ENCODE measurements at regions of chr3 and their contacts with region 1.

Region 1: GRCh38 chr3:186930641-186931531 is 560 bp downstream of the ST6GAL1 start:
- DNase-seq: peak; percentile 67 to 80
- H3K4me3 ChIP-seq: peak overlapping the region; percentile 81
- H3K4me3 Mint-ChIP-seq: peak overlapping the region; percentile 91
- H3K27ac Mint-ChIP-seq: peak overlapping the region; percentile 83
- H3K4me1 ChIP-seq: no peaks in the 10 kb centered on the region
- H3K4me1 Mint-ChIP-seq: peaks cover 5% of the 10 kb centered on the region
- H3K27me3 ChIP-seq: no peaks in the 10 kb centered on the region
- H3K27me3 Mint-ChIP-seq: no peaks in the 10 kb centered on the region
- CTCF ChIP-seq: peak in 1 of 2 experiments; percentile 12

Region 2: DNA sequence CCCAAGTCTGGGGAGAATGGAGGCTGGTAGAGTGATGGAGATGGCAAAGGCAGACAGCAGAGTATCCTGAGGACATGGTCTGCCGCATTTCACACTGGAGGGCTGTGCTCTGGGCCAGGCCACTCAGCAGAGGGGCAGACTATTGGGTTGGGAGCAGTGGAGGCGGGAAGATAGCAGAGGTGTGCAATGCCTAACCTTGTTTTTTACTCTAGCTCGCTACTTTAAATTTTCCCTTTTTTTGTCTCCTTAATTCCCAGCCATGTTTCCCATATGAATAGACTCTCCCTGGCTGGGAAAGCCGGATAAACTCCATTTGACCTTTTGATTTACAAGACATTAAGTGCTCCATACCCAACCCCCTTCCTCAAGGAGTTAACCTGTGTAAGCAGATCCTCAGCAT is 34.0 kb before region 1 on chr3:
- CTCF ChIA-PET with region 1: no interaction called
- POLR2A ChIA-PET with region 1: no interaction called
- intact Hi-C with region 1: loop called (anchors 5 kb)
- DNase-seq: no peak
- H3K4me3 ChIP-seq: no peak overlapping the region
- H3K4me3 Mint-ChIP-seq: peak overlapping the region; percentile 42
- H3K27ac Mint-ChIP-seq: peak overlapping the region; percentile 83
- H3K4me1 ChIP-seq: peaks cover 27% of the 10 kb centered on the region
- H3K4me1 Mint-ChIP-seq: peaks cover 21% of the 10 kb centered on the region
- H3K27me3 ChIP-seq: no peaks in the 10 kb centered on the region
- H3K27me3 Mint-ChIP-seq: no peaks in the 10 kb centered on the region
- CTCF ChIP-seq: no peak

Region 3: DNA sequence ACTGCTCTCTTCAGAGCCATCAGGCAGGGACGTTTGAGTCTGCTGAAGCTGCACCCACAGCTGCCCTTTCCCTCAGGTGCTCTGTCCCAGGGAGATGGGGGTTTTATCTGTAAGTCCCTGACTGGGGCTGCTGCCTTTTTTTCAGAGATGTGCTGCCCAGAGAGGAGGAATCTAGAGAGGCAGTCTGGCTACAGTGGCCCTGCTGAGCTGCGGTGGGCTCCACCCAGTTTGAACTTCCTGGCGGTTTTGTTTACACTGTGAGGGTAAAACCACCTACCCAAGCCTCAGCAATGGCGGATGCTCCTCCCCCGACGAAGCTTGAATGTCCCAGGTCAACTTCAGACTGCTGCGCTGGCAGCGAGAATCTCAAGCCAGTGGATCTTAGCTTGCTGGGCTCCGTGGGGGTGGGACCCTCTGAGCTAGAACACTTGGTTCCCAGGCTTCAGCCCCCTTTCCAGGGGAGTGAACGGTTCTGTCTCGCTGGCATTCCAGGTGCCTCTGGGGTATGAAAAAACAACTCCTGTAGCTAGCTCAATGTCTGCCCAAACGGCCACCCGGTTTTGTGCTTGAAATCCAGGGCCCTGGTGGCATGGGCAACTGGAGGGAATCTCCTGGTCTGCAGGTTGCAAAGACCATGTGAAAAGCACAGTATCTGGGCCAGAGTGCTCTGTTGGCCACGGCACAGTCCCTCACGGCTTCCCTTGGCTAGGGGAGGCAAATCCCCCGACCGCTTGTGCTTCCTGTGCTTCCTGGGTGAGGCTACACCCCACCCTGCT is 21.6 kb before region 1 on chr3:
- CTCF ChIA-PET with region 1: no interaction called
- POLR2A ChIA-PET with region 1: no interaction called
- intact Hi-C with region 1: no loop called
- DNase-seq: no peak
- H3K4me3 ChIP-seq: no peak overlapping the region
- H3K4me3 Mint-ChIP-seq: no peak overlapping the region
- H3K27ac Mint-ChIP-seq: no peak overlapping the region
- H3K4me1 ChIP-seq: peaks cover 11% of the 10 kb centered on the region
- H3K4me1 Mint-ChIP-seq: peaks cover 16% of the 10 kb centered on the region
- H3K27me3 ChIP-seq: no peaks in the 10 kb centered on the region
- H3K27me3 Mint-ChIP-seq: no peaks in the 10 kb centered on the region
- CTCF ChIP-seq: no peak

Region 4: DNA sequence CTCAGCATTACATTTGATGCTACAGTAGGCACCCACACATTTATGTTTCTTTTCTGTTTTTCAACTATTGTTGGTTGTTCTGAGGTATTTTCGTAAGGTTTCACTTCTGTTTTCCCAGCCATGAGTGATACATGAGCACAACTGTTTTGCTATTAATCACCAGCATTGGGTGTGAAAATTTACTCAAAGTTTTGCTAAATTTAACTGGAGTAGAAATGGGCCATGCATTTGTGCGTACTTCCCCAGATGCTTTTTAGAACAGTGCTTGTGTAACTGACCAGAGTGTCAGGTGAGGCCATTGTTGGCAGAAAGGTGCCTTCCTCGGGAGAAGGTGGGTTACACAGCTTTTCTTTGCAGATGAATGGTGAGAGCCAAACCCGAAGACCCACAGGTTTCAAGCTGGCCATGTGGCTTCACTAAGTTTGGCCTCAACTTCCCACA is 69.8 kb after region 1 on chr3:
- CTCF ChIA-PET with region 1: no interaction called
- POLR2A ChIA-PET with region 1: no interaction called
- intact Hi-C with region 1: no loop called
- DNase-seq: no peak
- H3K4me3 ChIP-seq: no peak overlapping the region
- H3K4me3 Mint-ChIP-seq: no peak overlapping the region
- H3K27ac Mint-ChIP-seq: no peak overlapping the region
- H3K4me1 ChIP-seq: no peaks in the 10 kb centered on the region
- H3K4me1 Mint-ChIP-seq: peaks cover 3% of the 10 kb centered on the region
- H3K27me3 ChIP-seq: no peaks in the 10 kb centered on the region
- H3K27me3 Mint-ChIP-seq: no peaks in the 10 kb centered on the region
- CTCF ChIP-seq: no peak

Region 5: GRCh38 chr3:188476935-188477334 is 1546.0 kb after region 1 on chr3:
- CTCF ChIA-PET with region 1: no interaction called
- POLR2A ChIA-PET with region 1: no interaction called
- intact Hi-C with region 1: no loop called
- DNase-seq: no peak
- H3K4me3 ChIP-seq: no peak overlapping the region
- H3K4me3 Mint-ChIP-seq: no peak overlapping the region
- H3K27ac Mint-ChIP-seq: no peak overlapping the region
- H3K4me1 ChIP-seq: peaks cover 3% of the 10 kb centered on the region; the same call in 1 of the 2 replicates
- H3K4me1 Mint-ChIP-seq: peaks cover 7% of the 10 kb centered on the region
- H3K27me3 ChIP-seq: no peaks in the 10 kb centered on the region
- H3K27me3 Mint-ChIP-seq: no peaks in the 10 kb centered on the region
- CTCF ChIP-seq: no peak